ENCODE measurements at regions of chr2 and their contacts with region 1.

Region 1: DNA sequence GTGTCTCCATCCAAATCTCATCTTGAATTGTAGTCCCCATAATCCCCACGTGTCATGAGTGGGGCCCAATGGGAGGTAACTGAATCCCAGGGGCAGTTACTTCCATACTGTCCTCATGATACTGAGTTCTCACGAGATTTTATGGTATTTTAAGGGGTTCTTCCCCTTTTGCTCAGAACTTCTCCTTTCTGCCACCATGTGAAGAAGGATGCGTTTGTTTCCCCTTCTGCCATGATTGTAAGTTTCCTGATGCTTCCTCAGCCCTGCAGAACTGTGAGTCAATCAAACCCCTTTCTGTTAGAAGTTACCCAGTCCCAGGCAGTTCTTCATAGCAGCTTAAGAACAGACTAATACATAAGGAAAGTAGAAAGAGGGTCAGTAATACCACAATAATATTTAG is 480.4 kb downstream of the KCNJ3 start:
- DNase-seq: no peak
- H3K4me3 ChIP-seq: no peak overlapping the region
- CTCF ChIP-seq: no peak

Region 2: DNA sequence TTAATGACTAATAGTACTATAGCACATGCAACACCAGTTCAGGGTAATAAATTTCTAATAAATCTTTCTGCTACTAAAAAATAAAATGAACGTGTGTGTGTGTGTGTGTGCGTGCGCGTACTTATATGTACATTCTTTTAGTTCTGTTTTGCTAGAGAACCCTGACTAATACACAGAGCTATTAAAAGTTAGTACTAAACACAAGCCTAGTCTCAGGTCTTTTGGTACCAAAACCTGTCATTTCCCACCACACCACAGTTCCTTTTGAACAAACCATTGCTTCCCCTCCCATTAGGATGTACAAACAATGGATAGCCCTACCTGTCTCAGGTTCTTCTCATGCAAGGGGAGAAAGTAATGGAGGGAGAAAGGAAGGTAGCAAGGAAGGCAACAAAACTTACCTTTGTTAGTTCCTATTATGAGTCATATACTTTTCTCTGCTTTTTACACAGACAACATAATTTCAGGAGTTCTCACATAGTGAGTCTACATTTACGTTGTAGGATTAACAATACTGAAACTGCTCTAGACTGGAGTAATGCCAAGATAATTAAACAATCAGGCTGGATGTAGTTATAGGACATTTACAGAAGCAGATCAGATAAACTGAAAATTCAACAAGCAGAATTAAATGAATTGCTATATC is 53.2 kb before region 1 on chr2:
- in situ Hi-C with region 1: loop called (anchors 5 kb)
- DNase-seq: no peak
- H3K4me3 ChIP-seq: no peak overlapping the region
- CTCF ChIP-seq: no peak

Measured in astrocyte of the cerebellum (primary cell).